ENCODE measurements at regions of chr19 and their contacts with region 1.

Region 1: DNA sequence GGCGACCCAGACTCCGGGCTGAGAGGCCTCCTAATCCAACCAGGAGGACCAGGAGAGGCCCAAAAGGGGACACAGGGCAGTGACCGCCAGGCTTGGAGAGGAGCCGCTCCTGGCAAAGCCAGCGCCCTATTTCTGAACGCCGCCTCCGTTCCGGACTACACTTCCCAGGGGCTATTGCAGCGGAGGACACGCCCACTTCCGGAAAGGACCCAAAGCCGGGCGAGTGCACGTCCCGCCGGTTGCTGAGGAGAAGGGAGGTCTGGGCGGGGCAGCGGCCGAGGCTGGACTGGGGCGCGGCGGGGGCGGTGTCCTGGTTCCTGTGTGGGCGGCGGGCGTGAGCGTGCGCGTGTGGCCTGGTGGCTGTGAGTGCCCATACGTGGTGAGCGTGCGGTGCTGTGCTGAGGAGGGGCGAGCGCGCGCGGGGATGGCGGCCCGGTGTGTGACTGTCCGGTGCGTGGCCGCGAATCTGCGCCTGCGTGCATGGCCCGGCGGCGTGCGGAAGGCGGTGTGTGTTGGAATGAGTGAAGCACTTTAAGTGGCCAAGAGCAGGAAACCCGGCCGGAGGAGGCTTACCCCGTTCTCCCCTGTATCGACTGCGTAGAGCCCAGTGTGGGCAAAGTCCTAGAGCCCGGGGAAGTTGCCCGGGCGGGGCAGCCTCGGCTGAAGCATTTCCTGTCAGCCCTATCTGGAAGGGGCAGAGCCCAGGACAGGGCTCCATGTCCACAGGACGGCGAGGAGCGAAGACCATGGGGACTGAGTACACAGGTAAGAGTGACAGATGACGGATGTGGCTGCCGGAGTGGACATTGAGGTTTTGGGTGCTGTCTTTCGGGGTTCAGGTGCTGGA is at the start of gene ZNF470:
- DNase-seq: peak; percentile 91
- H3K4me3 Mint-ChIP-seq: peak within 1 kb of the TSS; percentile 94
- H3K27ac Mint-ChIP-seq: peak within 1 kb of the TSS; percentile 73
- H3K4me1 Mint-ChIP-seq: peaks cover 13% of the 10 kb centered on the region
- H3K27me3 Mint-ChIP-seq: no peaks in the 10 kb centered on the region
- total RNA-seq, gene ZNF470: 0.99 to 1.5 TPM

Region 2: DNA sequence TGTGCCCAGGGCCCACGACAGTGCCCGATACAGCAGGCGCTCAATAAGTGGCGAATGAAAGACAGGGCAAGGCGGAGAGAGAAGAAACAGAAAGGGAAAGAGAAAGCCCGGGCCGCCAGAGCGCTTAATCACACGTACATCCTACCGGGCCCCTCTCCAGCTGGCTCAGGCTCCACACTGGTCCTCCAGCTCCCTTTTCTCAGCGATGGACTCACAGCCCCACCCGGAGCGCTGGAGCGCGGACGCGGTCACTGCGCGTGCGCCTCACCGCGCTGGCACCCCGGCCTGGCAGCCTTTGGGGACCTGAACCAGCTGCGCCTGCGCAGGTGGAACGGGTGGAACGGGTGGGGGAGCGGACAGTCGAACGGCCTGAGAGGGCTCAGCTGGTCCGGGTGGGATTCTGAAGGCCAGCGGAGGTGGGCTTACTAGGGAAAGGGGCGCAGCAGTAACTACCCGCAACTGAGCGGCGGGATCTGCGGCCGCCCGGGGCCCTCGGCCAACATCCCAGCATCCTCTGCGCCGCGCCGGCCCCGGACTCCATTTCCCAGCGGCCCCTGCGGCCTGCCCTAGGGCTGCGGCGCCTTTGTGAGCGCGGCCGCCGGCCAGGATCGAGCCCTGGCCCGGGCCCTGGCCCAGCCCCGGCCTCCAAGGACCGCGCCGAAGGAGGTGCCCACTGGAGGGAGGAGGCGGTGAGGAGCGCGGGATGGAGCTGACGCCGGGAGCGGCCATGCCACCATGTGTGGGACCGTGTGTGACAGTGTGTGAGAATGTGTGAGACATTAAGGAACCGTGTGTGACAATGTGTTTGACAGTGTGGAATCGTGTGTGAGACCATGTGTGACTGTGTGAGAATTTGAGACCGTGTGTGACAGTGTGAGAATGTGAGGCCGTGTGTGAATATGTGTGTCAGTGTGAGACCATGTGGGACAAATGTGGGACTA is 163.5 kb before region 1 on chr19 and contains the start of gene ZNF583:
- CTCF ChIA-PET with region 1: no interaction called
- intact Hi-C with region 1: loop called (anchors 10 kb)
- DNase-seq: peak; percentile 88
- H3K4me3 Mint-ChIP-seq: peak within 1 kb of the TSS; percentile 85
- H3K27ac Mint-ChIP-seq: peak within 1 kb of the TSS; percentile 96
- H3K4me1 Mint-ChIP-seq: peaks cover 32% of the 10 kb centered on the region
- H3K27me3 Mint-ChIP-seq: no peaks in the 10 kb centered on the region
- total RNA-seq, gene ZNF583: 0.55 to 1.2 TPM

Region 3: DNA sequence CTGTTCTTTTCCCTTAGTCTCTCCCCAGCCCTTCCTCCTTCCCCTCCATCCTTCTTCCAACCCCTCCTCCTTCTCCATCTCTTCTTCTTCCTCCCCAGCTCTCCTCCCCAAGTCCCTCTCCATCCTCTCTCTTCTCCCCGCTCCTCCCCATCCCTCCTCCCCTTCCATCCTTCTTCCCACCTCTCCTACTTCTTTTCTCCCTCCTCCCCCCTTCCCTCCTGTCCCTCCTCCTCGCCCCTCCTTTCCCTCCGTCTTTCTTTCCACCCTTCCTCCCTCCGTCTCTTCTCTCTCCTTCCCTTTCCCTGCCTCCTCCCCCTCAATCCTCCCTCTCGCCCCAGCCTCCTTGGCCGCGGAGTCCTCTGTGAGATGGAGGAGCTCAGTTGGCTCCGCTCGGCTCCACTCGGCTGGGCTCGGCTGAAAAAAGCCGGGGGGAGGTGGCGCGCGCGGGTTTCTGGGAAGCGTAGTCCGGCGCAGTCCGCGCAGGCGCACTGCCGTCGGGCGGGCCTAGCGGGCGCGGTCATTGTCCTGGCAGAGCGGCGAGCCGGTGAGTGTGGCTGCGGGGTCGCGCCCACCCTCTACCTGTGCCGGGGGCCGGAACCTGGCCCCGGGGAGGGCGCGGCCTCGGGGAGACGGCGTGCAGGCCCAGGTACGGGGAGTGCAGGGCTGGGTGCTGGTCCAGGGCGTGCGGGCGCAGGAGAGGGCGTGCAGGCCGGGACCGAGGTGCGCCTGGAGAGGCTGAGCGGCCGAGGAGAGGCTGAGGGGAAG is 27.5 kb after region 1 on chr19 and contains the start of gene ZNF71:
- CTCF ChIA-PET with region 1: no interaction called
- intact Hi-C with region 1: loop called (anchors 1 kb)
- DNase-seq: peak; percentile 91
- H3K4me3 Mint-ChIP-seq: peak within 1 kb of the TSS; percentile 92
- H3K27ac Mint-ChIP-seq: peak within 1 kb of the TSS; percentile 52
- H3K4me1 Mint-ChIP-seq: peaks cover 21% of the 10 kb centered on the region
- H3K27me3 Mint-ChIP-seq: no peaks in the 10 kb centered on the region
- total RNA-seq, gene ZNF71: 2.5 to 3.0 TPM

Measured in activated naive CD4-positive, alpha-beta T cell treated with anti-CD3 and anti-CD28 coated beads for 36 hours (primary cell).